ENCODE measurements at regions of chr6 and their contacts with region 1.

Region 1: GRCh38 chr6:143842902-143843676 is at the start of gene LTV1:
- DNase-seq: peak; percentile 94
- ATAC-seq: peak; percentile 99 to 100
- H3K4me3 ChIP-seq: peak within 1 kb of the TSS; percentile 71 to 89 (median 84)
- H3K27ac ChIP-seq: peak within 1 kb of the TSS; percentile 85 to 94 (median 89)
- H3K4me1 ChIP-seq: peaks cover 9 to 14% of the 10 kb centered on the region in 2 donors
- H3K27me3 ChIP-seq: no peaks in the 10 kb centered on the region
- CTCF ChIP-seq: peak in 1 of 5 experiments; percentile 15
- POLR2A ChIP-seq: peak; percentile 51 to 53
- total RNA-seq, gene LTV1: 13.0 to 25.6 (median 18.5) TPM

Region 2: GRCh38 chr6:143450453-143451371 is 392.4 kb before region 1 on chr6 and contains the starts of genes ADAT2 and PEX3:
- in situ Hi-C with region 1: no loop called
- intact Hi-C with region 1: loop called (anchors 2 kb)
- DNase-seq: peak; percentile 88 to 92
- ATAC-seq: peak; percentile 96
- H3K4me3 ChIP-seq: peak within 1 kb of the TSS; percentile 62 to 87 (median 74)
- H3K27ac ChIP-seq: peak within 1 kb of the TSS; percentile 78 to 87 (median 84)
- H3K4me1 ChIP-seq: peaks cover 18 to 23% of the 10 kb centered on the region in 2 donors
- H3K27me3 ChIP-seq: no peaks in the 10 kb centered on the region
- CTCF ChIP-seq: no peak
- POLR2A ChIP-seq: peak; percentile 50 to 77
- total RNA-seq, gene ADAT2: 0.16 to 4.4 (median 0.94) TPM
- total RNA-seq, gene PEX3: 9.8 to 18.2 (median 12.3) TPM

Region 3: GRCh38 chr6:143569040-143569439 is 274.0 kb before region 1 on chr6:
- in situ Hi-C with region 1: no loop called
- intact Hi-C with region 1: loop called (anchors 2 kb)
- DNase-seq: no peak
- ATAC-seq: peak in 1 of 2 donors; percentile 47
- H3K4me3 ChIP-seq: no peak overlapping the region
- H3K27ac ChIP-seq: no peak overlapping the region
- H3K4me1 ChIP-seq: no peaks in the 10 kb centered on the region
- H3K27me3 ChIP-seq: no peaks in the 10 kb centered on the region
- CTCF ChIP-seq: no peak
- POLR2A ChIP-seq: no peak

Region 4: GRCh38 chr6:143677891-143678791 is 164.9 kb before region 1 on chr6 and contains the start of gene PHACTR2:
- in situ Hi-C with region 1: no loop called
- intact Hi-C with region 1: loop called (anchors 2 kb)
- DNase-seq: peak; percentile 50 to 58
- ATAC-seq: peak; percentile 78 to 84
- H3K4me3 ChIP-seq: peak within 1 kb of the TSS; percentile 72 to 87 (median 78)
- H3K27ac ChIP-seq: peak within 1 kb of the TSS; percentile 77 to 88 (median 84)
- H3K4me1 ChIP-seq: peaks cover 14 to 30% of the 10 kb centered on the region in 2 donors
- H3K27me3 ChIP-seq: no peaks in the 10 kb centered on the region
- CTCF ChIP-seq: no peak
- POLR2A ChIP-seq: peak; percentile 59 to 65
- total RNA-seq, gene PHACTR2: 25.4 to 31.8 (median 26.1) TPM

Region 5: DNA sequence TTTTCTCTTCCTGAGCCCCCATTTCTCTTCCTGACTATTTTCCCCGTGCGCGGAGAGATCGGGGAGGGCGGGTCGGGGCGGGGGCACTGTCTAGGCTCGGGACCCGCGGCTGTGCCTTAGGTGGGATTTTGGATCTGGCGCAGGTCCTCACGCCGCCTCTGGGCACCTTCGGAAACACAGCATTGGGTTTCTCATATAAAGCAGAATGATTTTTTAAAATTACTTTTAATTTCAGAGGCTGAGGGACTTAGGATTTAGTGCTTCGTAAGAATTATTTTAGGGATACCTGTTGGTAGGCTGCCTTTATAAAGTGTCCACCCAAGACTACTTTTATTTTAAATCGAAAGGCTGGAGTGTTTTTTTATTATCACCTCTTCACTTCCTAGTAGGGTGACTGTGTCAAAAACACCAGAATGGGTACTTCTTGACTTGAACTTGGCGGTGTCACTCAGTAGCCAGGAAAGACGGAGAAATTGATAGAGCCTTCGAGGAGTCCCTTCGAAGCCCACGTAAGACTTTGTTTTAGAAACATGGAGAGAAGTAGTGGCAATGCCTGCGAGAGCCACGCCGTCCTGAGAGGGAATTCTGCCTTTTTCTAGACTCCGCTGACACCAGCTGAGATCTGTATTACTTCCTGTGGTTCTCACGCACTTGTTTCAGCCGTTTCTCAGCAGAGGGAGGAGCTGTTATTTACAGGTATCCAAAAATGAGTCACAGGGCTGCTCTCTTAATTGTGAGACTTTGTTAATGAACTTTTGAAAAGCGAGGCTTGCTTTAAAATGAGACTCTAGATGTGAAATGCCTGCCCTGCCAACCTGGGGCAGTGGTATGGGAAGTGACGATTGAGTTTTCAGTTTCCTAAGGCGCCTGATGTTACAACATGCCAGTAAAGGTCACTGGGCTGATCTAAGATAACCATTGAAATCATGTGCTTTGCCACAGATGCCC is 307.9 kb after region 1 on chr6:
- in situ Hi-C with region 1: no loop called
- intact Hi-C with region 1: no loop called
- DNase-seq: no peak
- ATAC-seq: peak; percentile 35 to 47
- H3K4me3 ChIP-seq: peak overlapping the region; percentile 62 to 81 (median 70)
- H3K27ac ChIP-seq: peak overlapping the region; percentile 10 to 72 (median 64)
- H3K4me1 ChIP-seq: peaks cover 2 to 4% of the 10 kb centered on the region in 2 donors
- H3K27me3 ChIP-seq: peaks cover 8 to 21% (median 8%) of the 10 kb centered on the region in 3 donors
- CTCF ChIP-seq: no peak
- POLR2A ChIP-seq: peak; percentile 31 to 34

Measured in gastrocnemius medialis (tissue), 4 donors.